ENCODE measurements at regions of chr3 and their contacts with region 1.

Region 1: DNA sequence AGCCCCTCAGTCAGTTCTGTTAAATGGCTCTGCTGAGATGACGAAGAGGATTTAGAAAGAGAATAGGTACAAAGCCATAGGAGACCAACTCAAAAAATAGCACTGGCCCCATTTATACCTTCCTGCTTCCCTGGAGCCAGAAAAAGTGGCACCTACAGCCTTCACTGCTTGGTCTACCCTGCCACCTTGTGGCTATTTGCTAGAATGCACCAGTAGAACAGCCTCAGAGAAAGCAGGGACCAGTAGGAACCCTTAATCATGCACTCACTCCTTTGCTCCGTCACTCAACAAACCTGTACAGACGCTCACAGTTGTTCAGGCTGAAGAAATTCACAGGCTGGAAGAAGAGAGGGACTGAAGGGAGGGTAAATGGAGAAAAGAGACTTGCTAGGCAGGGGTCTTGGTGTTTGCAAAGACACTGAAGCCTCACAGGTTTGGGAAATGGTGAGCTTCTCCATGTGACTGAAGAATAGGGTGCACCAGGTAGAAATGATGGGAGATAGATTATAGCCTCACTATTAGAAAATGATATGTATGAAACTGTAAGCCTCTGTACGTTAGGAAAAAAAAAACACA is 12.1 kb upstream of the RTP2 start:
- DNase-seq: peak; percentile 61
- H3K4me3 Mint-ChIP-seq: no peak overlapping the region
- H3K27ac Mint-ChIP-seq: no peak overlapping the region
- H3K4me1 Mint-ChIP-seq: peaks cover 8% of the 10 kb centered on the region
- H3K27me3 Mint-ChIP-seq: peaks cover 9% of the 10 kb centered on the region

Region 2: GRCh38 chr3:187041362-187042307 is 672.9 kb before region 1 on chr3:
- intact Hi-C with region 1: no loop called
- DNase-seq: peak; percentile 61
- H3K4me3 Mint-ChIP-seq: peak overlapping the region; percentile 68
- H3K27ac Mint-ChIP-seq: peak overlapping the region; percentile 99
- H3K4me1 Mint-ChIP-seq: peaks cover 76% of the 10 kb centered on the region
- H3K27me3 Mint-ChIP-seq: no peaks in the 10 kb centered on the region

Region 3: GRCh38 chr3:187223799-187224198 is 490.7 kb before region 1 on chr3:
- intact Hi-C with region 1: loop called (anchors 1 kb)
- DNase-seq: no peak
- H3K4me3 Mint-ChIP-seq: no peak overlapping the region
- H3K27ac Mint-ChIP-seq: no peak overlapping the region
- H3K4me1 Mint-ChIP-seq: no peaks in the 10 kb centered on the region
- H3K27me3 Mint-ChIP-seq: peaks cover 10% of the 10 kb centered on the region

Region 4: GRCh38 chr3:187616307-187616972 is 98.1 kb before region 1 on chr3:
- intact Hi-C with region 1: loop called (anchors 1 kb)
- DNase-seq: peak; percentile 28
- H3K4me3 Mint-ChIP-seq: no peak overlapping the region
- H3K27ac Mint-ChIP-seq: no peak overlapping the region
- H3K4me1 Mint-ChIP-seq: no peaks in the 10 kb centered on the region
- H3K27me3 Mint-ChIP-seq: peaks cover 30% of the 10 kb centered on the region